Common myeloid progenitor, CD34-positive (primary cell): ENCODE measurements at regions of chr7 and their contacts with region 1.

Region 1: GRCh38 chr7:142669074-142669654 is 80.1 kb upstream of the PRSS1 start:
- DNase-seq: peak; percentile 31 to 50 (median 49)
- H3K4me3 ChIP-seq: no peak overlapping the region
- H3K27ac ChIP-seq: no peak overlapping the region
- H3K4me1 ChIP-seq: peaks cover 17 to 43% (median 34%) of the 10 kb centered on the region in 4 experiments
- H3K27me3 ChIP-seq: no peaks in the 10 kb centered on the region

Region 2: GRCh38 chr7:142654398-142654797 is 14.8 kb before region 1 on chr7:
- CTCF ChIA-PET with region 1: interaction called, 12 read pairs
- POLR2A ChIA-PET with region 1: no interaction called
- DNase-seq: peak in 2 of 3 donors; percentile 63 to 67
- H3K4me3 ChIP-seq: no peak overlapping the region
- H3K27ac ChIP-seq: no peak overlapping the region
- H3K4me1 ChIP-seq: no peaks in the 10 kb centered on the region
- H3K27me3 ChIP-seq: no peaks in the 10 kb centered on the region

Region 3: DNA sequence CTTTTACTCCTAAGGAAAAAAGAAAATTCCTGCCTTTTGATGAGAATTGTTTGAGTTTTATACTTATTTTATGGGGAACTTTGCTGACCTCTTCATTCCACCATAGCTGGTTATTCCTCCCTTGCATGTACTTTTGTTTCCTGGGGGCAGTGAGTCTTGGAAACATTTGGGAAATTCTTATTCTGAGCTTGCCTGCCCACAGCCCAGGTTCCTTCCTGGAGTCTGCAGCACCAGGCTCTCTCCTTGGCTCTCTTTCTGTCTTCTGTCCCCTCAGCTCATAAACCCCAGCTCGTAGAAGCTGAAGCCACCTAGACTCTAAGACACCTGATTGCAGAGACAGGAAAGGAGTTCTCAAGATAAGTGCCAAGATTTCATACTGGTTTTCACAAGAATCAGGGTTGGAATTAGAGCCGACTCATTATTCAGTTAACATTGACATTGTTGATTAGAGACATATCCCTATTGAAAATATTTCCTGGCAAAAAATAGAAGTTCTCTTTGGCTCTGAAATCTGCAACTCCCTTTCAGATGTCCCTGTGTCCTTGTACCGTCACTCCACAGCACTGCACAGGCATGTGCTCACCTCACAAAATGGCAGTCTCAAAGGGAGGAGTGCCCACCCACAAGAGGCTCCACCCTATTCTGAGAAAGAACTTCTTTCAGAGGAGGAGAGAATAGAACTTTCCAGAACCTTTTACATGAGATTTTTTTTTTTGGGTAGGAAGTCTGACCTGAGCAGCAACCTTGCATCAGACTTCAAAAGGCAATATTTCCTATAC is 12.3 kb after region 1 on chr7:
- CTCF ChIA-PET with region 1: interaction called, 13 read pairs
- POLR2A ChIA-PET with region 1: no interaction called
- DNase-seq: no peak
- H3K4me3 ChIP-seq: no peak overlapping the region
- H3K27ac ChIP-seq: no peak overlapping the region
- H3K4me1 ChIP-seq: peaks cover 0 to 18% (median 10%) of the 10 kb centered on the region in 4 experiments
- H3K27me3 ChIP-seq: no peaks in the 10 kb centered on the region